Astrocyte of the cerebellum (primary cell): ENCODE measurements at regions of chr9 and their contacts with region 1.

Region 1: DNA sequence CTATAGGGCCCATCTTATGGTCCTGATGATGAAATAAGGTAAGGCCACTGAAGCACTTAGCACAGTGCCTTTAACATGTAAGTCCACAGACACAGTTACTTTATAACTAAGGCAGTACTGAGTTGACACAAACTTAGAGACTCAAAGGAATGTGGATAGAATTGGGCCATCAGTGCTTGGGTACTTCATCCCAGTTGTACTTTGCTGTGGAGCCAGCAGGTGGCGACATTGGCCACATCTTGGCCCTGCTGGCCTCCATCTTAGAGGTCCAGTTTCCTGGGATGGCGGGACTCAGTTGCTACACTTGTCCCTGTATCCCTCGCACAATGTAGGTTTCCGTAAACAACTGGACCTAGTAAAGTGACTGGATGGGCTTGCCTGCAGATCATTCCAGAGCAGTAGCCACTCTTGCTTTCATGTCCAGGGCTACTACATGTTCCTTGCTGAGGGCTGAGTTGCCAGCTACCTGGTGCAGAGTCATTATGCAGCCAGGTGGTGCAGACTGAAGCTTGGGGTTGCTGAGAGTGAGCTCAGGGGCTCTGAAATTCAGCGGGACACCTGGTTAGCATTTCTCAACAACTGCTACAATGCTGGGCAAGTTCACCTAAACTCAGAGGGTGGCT is 10.6 kb downstream of the MTAP start:
- DNase-seq: peak; percentile 54
- H3K4me3 ChIP-seq: no peak overlapping the region
- CTCF ChIP-seq: peak; percentile 83

Region 2: DNA sequence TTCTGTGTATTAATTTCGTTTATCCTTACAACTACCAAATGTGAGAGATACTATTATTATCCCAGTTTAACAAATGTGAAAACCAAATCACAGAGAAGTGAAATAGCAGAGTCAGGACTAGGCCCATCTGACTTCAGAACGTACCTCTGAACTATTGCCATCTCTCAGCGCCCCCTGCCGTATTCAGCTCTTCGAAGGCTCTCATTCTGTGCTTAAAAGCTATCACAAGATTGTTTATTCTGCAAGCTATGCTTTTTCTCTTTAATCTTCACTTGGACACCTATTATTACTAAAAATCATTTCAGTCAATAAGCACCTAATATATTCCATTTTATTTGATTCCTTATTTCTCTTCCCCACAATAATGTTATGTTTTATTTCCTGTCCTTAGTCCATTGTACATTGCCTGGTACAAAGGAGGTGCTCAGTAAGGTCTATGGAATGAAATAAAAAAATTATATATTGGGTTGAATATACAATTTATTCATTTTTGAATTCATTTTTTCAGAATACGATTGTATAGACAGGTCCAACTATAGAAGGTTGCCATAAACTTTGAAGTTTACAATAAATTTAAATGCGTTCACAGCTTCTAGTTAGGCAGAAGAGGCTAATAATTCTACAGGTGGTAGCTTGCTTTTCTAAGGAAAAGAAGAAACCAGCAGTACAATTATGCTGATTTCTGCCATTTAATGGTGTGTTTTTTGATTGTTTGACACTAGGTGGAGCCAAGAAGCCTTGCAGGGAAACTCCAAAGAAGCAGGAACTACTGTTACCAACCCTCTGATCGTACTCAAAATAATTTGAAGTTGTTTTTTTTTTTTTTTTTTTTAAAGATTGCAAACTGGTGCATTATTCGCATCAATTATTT is 431.3 kb after region 1 on chr9:
- in situ Hi-C with region 1: loop called (anchors 5 kb)
- DNase-seq: peak; percentile 44
- H3K4me3 ChIP-seq: no peak overlapping the region
- CTCF ChIP-seq: peak; percentile 79

Region 3: GRCh38 chr9:22425551-22425950 is 612.5 kb after region 1 on chr9:
- in situ Hi-C with region 1: loop called (anchors 10 kb)
- DNase-seq: no peak
- H3K4me3 ChIP-seq: no peak overlapping the region
- CTCF ChIP-seq: no peak